ENCODE measurements at regions of chr2 and their contacts with region 1.

Region 1: GRCh38 chr2:85642725-85643124 is 25.3 kb downstream of the SFTPB start:
- H3K4me3 ChIP-seq: no peak overlapping the region
- H3K27ac ChIP-seq: no peak overlapping the region
- H3K4me1 ChIP-seq: no peaks in the 10 kb centered on the region
- CTCF ChIP-seq: no peak

Region 2: DNA sequence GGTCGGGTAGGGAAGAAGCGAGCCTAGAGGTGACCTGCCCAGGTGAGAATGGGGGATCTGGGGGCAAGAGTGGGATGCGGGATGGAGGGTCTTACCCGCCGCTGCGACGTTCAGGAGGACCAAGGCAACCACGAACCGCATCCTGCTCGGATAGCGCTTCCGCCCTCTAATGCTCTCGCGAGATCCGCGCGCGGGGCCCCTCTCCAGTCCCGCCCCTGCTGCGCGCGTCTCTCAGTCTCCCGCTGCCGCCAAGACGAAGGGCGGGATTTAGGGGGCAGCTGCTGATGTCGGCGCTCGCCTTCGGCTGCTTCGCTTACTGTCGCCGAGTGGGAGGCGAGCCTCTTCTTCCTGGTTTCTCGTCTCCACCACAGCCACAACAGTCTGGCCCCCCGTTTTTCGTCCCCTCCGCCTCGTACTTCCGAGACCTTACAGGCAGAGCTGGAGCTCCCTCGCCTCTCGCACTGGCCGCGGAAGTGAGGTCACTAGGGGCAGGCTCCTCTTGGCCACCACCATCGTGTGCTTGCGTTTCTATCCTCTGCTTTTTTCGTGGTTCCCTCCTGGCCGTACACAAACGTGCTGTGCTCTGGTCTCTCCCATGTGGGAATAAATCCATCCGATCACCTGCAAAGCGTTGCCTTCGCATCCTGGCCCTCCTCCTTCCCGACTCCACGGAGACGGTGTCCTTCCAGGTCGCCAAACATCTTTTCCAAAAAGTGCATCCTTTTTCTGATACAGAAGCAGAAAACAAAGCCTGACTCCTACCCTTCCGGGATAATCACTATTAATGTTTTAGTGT is 314.7 kb before region 1 on chr2 and contains the start of gene TGOLN2:
- CTCF ChIA-PET with region 1: no interaction called
- POLR2A ChIA-PET with region 1: no interaction called
- H3K4me3 ChIP-seq: peak within 1 kb of the TSS; percentile 85
- H3K27ac ChIP-seq: peak within 1 kb of the TSS; percentile 93
- H3K4me1 ChIP-seq: no peaks in the 10 kb centered on the region
- CTCF ChIP-seq: peak; percentile 83

Region 3: GRCh38 chr2:85536479-85536878 is 106.2 kb before region 1 on chr2:
- CTCF ChIA-PET with region 1: no interaction called
- POLR2A ChIA-PET with region 1: no interaction called
- H3K4me3 ChIP-seq: no peak overlapping the region
- H3K27ac ChIP-seq: no peak overlapping the region
- H3K4me1 ChIP-seq: 0 out of 2 replicates have a peak, but pooled peaks cover 2% of the 10 kb centered on the region
- CTCF ChIP-seq: no peak

Region 4: DNA sequence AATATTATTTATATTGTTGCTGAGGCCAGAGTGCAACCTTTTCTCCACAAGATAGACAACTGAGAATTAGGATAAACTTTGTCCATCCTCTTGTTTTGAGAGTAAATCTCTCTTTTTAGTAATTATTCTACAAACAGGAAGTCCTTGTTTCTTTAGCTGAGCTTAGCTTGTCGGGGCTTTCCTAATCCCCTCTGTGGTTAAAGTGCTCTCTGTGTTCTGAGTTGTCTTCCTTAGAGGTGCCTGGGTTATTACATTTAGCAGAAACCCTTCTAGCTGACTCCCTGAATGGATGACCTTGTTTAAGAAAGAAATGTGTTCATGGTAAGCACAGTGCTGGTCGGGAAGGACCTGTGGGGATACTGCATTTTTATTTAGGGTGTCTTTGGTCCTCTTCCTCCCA is 14.1 kb before region 1 on chr2:
- CTCF ChIA-PET with region 1: interaction called, 29 read pairs
- POLR2A ChIA-PET with region 1: no interaction called
- H3K4me3 ChIP-seq: no peak overlapping the region
- H3K27ac ChIP-seq: no peak overlapping the region
- H3K4me1 ChIP-seq: no peaks in the 10 kb centered on the region
- CTCF ChIP-seq: no peak

Region 5: GRCh38 chr2:85655961-85656417 is 13.3 kb after region 1 on chr2:
- CTCF ChIA-PET with region 1: interaction called, 19 read pairs
- POLR2A ChIA-PET with region 1: interaction called, 4 read pairs
- H3K4me3 ChIP-seq: no peak overlapping the region
- H3K27ac ChIP-seq: no peak overlapping the region
- H3K4me1 ChIP-seq: no peaks in the 10 kb centered on the region
- CTCF ChIP-seq: no peak

Region 6: DNA sequence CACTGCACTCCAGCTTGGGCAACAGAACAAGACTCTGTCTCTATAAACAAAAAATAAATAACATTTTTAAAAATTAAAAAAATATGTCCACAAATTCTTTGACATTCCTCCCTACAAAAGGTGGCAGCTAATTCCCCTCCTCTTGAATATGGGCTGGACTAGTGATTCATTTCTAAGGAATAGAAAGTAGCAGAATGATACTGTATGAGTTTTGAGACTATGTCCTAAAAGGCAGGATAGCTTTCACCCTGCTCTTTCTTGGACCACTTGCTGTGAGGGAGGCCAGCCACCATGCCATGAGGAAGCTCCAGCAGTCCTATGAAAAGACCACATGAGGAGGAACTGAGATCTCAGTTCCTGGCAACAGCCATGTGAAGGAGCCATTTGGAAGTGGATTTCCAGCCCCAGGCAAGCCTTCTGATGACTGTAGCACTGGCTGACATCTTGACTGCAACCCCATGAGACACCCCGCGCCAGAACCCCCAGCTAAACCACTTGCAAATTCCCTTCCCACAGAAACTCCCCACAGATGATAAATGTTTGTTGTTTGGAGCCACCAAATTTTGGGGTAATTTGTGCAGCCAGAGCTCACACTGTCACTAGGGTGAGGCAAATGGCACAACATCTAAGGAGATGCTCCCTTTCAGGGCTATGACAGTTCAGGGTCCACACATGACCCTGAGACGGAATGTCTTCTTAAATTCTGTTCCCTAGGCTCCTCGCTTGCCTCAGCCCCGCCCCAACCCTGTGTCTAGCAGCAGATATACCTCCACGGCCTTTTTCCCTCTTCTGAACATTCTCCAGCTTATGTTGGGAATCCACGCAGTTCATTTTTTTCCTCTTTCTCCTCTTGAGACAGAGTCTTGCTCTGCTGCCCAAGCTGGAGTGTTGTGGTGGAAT is 94.0 kb after region 1 on chr2:
- CTCF ChIA-PET with region 1: no interaction called
- POLR2A ChIA-PET with region 1: no interaction called
- H3K4me3 ChIP-seq: no peak overlapping the region
- H3K27ac ChIP-seq: no peak overlapping the region
- H3K4me1 ChIP-seq: no peaks in the 10 kb centered on the region
- CTCF ChIP-seq: no peak

Measured in HEK293 (cell line).